Activated CD4-positive, alpha-beta memory T cell treated with anti-CD3 and anti-CD28 coated beads for 36 hours (primary cell): ENCODE measurements at regions of chr19 and their contacts with region 1.

Region 1: DNA sequence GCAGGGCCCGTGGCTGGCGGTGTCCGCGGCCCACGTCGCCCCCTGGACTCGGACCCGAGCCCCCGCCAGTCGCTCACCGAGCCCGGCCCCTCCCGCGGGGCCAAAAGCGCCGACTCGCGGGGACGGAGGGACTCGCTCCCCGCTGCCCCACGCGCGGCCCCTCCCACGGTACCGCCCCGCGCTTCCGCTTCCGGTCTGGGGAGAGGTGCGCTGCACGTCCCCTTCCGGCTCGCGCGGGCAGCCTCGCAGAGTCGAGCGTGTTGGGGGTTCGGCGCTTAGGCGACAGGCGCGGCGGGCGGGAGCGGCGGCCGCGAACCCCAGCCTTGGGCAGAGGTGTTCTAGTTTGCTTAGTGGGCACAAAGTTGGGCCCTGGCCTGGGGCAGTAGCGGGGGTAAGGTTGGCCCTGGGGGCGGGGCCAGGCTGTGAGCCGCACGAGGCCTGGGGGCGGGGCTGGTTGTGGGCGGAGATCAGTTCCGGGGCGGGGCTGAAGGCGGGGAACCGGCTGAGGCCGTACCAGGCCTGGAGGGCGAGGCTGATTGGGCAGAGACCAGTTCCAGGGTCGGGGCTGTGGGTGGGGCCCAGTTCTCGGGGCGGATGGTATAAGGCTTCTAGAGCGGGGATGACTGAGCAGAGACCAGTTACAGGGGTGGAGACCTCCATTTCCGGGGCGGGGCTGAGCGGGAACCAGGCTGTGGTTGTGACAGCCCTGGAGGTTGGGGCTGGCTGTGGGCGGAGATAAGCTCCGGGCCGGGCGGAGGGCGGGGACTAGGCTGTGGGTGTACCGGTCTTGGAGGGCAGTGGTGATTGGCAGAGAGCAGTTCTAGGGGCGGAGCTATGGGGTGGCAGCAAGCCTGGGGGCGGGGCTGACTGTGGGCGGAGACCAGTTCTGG is at the starts of genes MBD3L1 and ZNF558:
- DNase-seq: peak; percentile 99
- H3K4me3 Mint-ChIP-seq: peak within 1 kb of the TSS; percentile 81
- H3K27ac Mint-ChIP-seq: peak within 1 kb of the TSS; percentile 94
- H3K4me1 Mint-ChIP-seq: peaks cover 22% of the 10 kb centered on the region
- H3K27me3 Mint-ChIP-seq: no peaks in the 10 kb centered on the region
- total RNA-seq, gene MBD3L1: not detected
- total RNA-seq, gene ZNF558: 27.3 to 30.3 TPM

Region 2: GRCh38 chr19:8592231-8593009 is 240.0 kb before region 1 on chr19:
- CTCF ChIA-PET with region 1: no interaction called
- POLR2A ChIA-PET with region 1: no interaction called
- intact Hi-C with region 1: loop called (anchors 1 kb)
- DNase-seq: peak; percentile 99
- H3K4me3 Mint-ChIP-seq: peak overlapping the region; percentile 70
- H3K27ac Mint-ChIP-seq: peak overlapping the region; percentile 59
- H3K4me1 Mint-ChIP-seq: peaks cover 7% of the 10 kb centered on the region
- H3K27me3 Mint-ChIP-seq: no peaks in the 10 kb centered on the region

Region 3: GRCh38 chr19:8904597-8904996 is 72.2 kb after region 1 on chr19:
- CTCF ChIA-PET with region 1: no interaction called
- POLR2A ChIA-PET with region 1: no interaction called
- intact Hi-C with region 1: no loop called
- DNase-seq: no peak
- H3K4me3 Mint-ChIP-seq: no peak overlapping the region
- H3K27ac Mint-ChIP-seq: no peak overlapping the region
- H3K4me1 Mint-ChIP-seq: no peaks in the 10 kb centered on the region
- H3K27me3 Mint-ChIP-seq: peaks cover 10% of the 10 kb centered on the region

Region 4: DNA sequence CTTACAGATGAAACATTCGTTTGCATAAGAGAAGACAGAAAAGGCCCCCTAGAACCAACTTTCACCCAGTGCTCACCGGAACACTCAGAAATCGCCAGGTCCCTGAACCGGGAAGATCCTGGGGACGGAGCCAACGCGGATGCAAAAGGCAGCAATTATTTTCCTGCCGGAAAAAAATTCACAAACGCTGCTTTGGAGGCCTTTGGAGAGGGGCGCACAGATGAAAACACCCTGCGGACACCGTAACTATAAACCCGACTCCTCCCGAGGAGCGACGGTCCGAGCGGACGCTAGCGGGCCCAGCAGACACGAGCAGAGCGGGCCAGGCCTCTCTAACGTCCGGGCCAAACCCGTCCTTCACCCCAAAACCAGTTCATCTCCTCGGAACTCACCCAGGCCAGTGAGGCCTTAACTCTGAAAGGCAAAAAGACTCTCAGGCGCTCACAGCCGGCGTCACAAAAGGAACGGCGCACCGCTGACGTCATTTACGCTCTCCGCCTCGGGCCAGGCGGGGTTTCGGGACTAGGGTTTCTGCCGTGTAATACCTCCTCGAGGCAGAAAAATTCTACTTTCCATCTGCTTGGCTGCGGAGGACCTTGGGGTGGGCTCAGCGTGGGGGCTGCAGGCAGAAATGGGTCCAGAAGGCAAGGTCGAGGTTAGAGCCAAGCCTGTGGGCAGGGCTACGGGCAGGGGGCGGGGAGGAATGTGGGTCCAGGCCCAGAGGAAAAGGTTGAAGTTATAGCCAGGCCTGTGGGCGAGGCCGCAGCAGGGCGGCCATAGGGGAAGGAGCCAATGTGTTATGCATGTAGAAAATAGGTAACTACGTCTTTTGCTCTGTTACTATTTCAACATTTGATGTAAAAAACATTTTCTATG is 706.0 kb after region 1 on chr19 and contains the start of gene ZNF426:
- CTCF ChIA-PET with region 1: no interaction called
- POLR2A ChIA-PET with region 1: no interaction called
- intact Hi-C with region 1: loop called (anchors 2 kb)
- DNase-seq: peak; percentile 93
- H3K4me3 Mint-ChIP-seq: peak within 1 kb of the TSS; percentile 96
- H3K27ac Mint-ChIP-seq: peak within 1 kb of the TSS; percentile 94
- H3K4me1 Mint-ChIP-seq: peaks cover 9% of the 10 kb centered on the region
- H3K27me3 Mint-ChIP-seq: no peaks in the 10 kb centered on the region
- total RNA-seq, gene ZNF426: 11.4 to 12.5 TPM